ENCODE measurements at regions of chr12 and their contacts with region 1.

Region 1: GRCh38 chr12:10749700-10750384 is 26.7 kb upstream of the YBX3 start:
- DNase-seq: peak; percentile 69
- CTCF ChIP-seq: peak; percentile 77

Region 2: GRCh38 chr12:10235761-10236631 is 513.8 kb before region 1 on chr12:
- CTCF ChIA-PET with region 1: interaction called, 22 read pairs
- POLR2A ChIA-PET with region 1: no interaction called
- DNase-seq: peak; percentile 40
- CTCF ChIP-seq: peak; percentile 83

Region 3: DNA sequence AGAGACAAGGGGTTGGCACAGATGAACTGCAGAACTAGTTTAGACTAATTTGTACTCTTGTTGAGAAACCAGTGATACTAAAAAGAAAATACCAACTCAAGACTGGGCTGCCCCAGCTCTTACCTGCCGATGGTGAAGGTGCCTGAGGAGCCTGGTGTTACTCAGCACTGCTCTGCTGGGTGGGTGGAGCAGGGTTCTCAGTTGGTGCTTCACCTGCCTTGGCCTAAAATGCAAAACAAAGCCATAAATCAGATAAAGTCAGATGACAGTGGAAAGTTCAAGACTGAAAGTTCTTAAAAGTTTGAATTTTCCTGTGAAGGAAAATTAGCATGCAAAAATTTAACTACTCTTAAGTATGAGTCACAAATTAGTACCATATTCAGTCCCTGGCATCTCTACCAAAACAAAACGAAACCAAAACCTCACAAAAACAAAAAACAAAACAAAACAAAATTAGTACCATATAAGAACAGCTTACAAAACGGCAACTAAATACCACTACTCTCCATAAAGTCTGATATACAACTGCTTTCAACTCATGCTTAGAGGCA is 48.6 kb before region 1 on chr12:
- CTCF ChIA-PET with region 1: interaction called, 11 read pairs
- POLR2A ChIA-PET with region 1: no interaction called
- DNase-seq: peak; percentile 13
- CTCF ChIP-seq: no peak

Region 4: GRCh38 chr12:10732549-10732948 is 17.3 kb before region 1 on chr12:
- CTCF ChIA-PET with region 1: interaction called, 20 read pairs
- POLR2A ChIA-PET with region 1: no interaction called
- DNase-seq: no peak
- CTCF ChIP-seq: no peak

Region 5: GRCh38 chr12:10779103-10779502 is 29.3 kb after region 1 on chr12:
- CTCF ChIA-PET with region 1: interaction called, 13 read pairs
- POLR2A ChIA-PET with region 1: no interaction called
- DNase-seq: no peak
- CTCF ChIP-seq: no peak